ENCODE measurements at regions of chr15 and their contacts with region 1.

Region 1: GRCh38 chr15:78299101-78299930 is at the start of gene SKIC8:
- DNase-seq: peak; percentile 97
- H3K4me3 ChIP-seq: peak within 1 kb of the TSS; percentile 62
- H3K27ac ChIP-seq: peak within 1 kb of the TSS; percentile 68
- H3K4me1 ChIP-seq: peaks cover 16% of the 10 kb centered on the region
- H3K27me3 ChIP-seq: no peaks in the 10 kb centered on the region
- CTCF ChIP-seq: no peak
- total RNA-seq, gene SKIC8: 55.5 and 57.9 TPM in 2 replicates

Region 2: DNA sequence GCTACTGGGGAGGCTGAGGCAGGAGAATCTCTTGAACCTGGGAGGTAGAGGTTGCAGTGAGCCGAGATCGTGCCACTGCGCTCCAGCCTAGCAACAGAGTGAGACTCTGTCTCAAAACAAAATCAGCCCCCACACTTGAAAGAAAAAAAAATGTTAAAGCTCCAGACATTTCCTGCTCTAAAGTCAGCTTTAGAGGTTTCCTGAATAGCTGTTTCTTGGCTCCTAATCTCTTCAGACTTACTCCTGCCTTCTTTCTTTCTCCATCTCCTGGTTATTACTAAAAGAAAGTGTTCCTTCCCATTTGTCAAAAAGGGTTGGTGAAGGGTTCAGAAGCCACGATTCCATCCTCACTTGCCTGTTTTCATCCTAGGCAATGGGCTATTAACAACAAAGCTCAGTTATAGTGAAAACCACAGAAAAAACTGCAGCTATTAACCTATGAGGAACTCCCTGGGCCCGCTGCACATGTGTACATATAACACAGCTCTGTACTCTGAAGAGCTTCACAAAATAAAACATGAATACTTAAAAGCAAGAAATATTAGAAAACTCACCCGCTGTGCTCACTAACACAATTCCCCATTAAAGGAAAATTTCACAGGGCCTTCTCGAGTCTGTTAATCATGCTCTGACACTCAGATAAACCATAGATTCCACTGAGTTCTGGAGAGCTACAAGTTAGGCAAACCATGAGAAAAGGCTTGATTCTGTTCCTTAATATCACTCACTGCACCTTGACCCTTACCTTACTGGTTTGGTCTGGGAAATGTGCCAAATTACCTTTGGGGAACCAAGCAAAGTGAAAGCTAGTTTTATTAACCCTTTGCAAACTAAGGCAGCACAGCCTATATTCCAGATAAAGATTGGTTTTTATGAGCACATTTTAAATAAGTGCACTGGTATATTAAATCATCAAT is 1138.5 kb before region 1 on chr15:
- CTCF ChIA-PET with region 1: no interaction called
- POLR2A ChIA-PET with region 1: interaction called, 11 read pairs
- intact Hi-C with region 1: no loop called
- DNase-seq: no peak
- H3K4me3 ChIP-seq: no peak overlapping the region
- H3K27ac ChIP-seq: no peak overlapping the region
- H3K4me1 ChIP-seq: no peaks in the 10 kb centered on the region
- H3K27me3 ChIP-seq: no peaks in the 10 kb centered on the region
- CTCF ChIP-seq: no peak

Region 3: DNA sequence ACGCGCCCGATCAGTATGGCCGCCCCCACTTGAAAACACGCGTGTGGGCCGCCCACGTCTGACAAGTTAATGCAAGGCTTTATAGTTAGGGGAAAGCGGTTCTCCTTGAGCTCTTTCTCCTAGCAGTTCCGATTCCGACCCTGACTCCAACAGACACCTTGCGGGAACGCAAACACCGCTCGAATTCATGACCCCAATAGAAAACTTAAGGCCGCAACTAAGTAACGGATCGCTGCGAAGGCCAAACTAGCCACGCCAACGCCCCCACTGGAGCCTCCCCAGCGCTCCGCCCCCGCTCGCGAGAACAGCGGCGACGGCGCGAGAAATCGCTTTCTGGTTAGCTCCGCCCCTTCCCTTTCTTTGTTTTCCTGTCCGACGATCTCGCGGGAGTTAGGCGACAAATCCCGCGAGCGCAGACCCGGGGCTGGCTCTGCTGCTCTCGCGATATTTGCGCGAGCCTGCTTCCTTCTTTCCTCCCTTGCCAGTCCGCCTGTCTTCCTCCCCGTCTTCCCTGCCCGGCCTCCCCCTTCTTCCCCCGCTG is 138.5 kb after region 1 on chr15 and contains the start of gene IREB2:
- CTCF ChIA-PET with region 1: no interaction called
- POLR2A ChIA-PET with region 1: no interaction called
- intact Hi-C with region 1: no loop called
- DNase-seq: peak; percentile 99
- H3K4me3 ChIP-seq: peak within 1 kb of the TSS; percentile 83
- H3K27ac ChIP-seq: peak within 1 kb of the TSS; percentile 96
- H3K4me1 ChIP-seq: peaks cover 6% of the 10 kb centered on the region
- H3K27me3 ChIP-seq: no peaks in the 10 kb centered on the region
- CTCF ChIP-seq: no peak
- total RNA-seq, gene IREB2: 85.9 and 86.4 TPM in 2 replicates

Measured in A673 (cell line).